ENCODE measurements at regions of chrX and their contacts with region 1.

Region 1: GRCh38 chrX:70289793-70290776 is at the starts of genes KIF4A and PDZD11:
- DNase-seq: peak; percentile 76
- ATAC-seq: peak; percentile 99
- H3K4me3 ChIP-seq: peak within 1 kb of the TSS; percentile 56
- H3K27ac ChIP-seq: peak within 1 kb of the TSS; percentile 58
- H3K4me1 ChIP-seq: peaks cover 2% of the 10 kb centered on the region; the same call in 1 of the 2 replicates
- H3K27me3 ChIP-seq: no peaks in the 10 kb centered on the region; the same call in 1 of the 2 replicates
- CTCF ChIP-seq: no peak
- POLR2A ChIP-seq: peak; percentile 23; the same call in 1 of the 2 replicates
- RAD21 ChIP-seq: no peak
- total RNA-seq, gene KIF4A: 19.0 and 24.4 TPM in 2 replicates
- total RNA-seq, gene PDZD11: 66.4 and 84.1 TPM in 2 replicates

Region 2: GRCh38 chrX:70042399-70043371 is 247.4 kb before region 1 on chrX:
- CTCF ChIA-PET with region 1: no interaction called
- POLR2A ChIA-PET with region 1: no interaction called
- dilution Hi-C with region 1: no loop called
- in situ Hi-C with region 1: no loop called
- intact Hi-C with region 1: no loop called
- DNase-seq: peak; percentile 42
- ATAC-seq: peak; percentile 27; the same call in 1 of the 2 replicates
- H3K4me3 ChIP-seq: no peak overlapping the region
- H3K27ac ChIP-seq: no peak overlapping the region
- H3K4me1 ChIP-seq: peaks cover 2% of the 10 kb centered on the region; the same call in 1 of the 2 replicates
- H3K27me3 ChIP-seq: peaks cover 12% of the 10 kb centered on the region
- CTCF ChIP-seq: no peak
- POLR2A ChIP-seq: no peak
- RAD21 ChIP-seq: no peak

Region 3: DNA sequence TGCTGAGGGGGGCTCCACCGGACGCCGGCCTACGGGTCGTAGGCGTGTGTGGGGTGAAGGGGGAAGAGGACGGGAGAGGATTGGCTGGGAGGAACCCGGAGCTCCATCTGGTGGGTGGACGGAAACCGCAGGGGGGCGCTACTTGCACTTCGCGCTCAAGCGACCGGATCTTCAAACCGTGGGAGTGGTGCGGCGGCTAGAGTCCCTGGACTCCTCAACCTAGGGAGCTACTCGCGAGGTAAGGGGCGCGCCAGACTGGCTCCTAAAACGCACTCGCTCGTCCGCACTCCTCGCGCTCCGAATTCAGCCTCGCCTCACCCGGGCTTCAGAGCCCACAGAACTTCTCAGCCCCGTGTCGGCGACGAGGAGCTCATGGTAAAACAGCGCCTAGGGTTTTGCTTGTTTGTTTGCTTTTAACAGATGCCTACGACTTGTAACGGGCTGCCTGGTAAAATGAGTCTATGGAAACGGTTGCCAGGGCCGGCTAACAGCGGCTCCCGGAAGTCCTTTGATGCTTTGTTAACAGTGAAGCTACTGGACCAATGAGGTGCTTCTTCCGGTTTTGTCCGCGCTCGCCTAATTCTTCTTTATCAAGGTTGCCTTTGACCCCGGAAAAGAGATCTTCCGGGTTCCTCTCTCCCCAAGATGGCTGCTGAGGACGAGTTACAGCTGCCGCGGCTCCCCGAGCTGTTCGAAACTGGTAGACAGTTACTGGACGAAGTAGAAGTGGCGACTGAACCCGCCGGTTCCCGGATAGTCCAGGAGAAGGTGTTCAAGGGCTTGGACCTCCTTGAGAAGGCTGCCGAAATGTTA is 156.6 kb before region 1 on chrX and contains the start of gene IGBP1:
- CTCF ChIA-PET with region 1: interaction called, 3 read pairs
- POLR2A ChIA-PET with region 1: no interaction called
- dilution Hi-C with region 1: no loop called
- in situ Hi-C with region 1: no loop called
- intact Hi-C with region 1: loop called (anchors 5 kb)
- DNase-seq: peak; percentile 83
- ATAC-seq: peak; percentile 88
- H3K4me3 ChIP-seq: peak within 1 kb of the TSS; percentile 83
- H3K27ac ChIP-seq: peak within 1 kb of the TSS; percentile 92
- H3K4me1 ChIP-seq: no peaks in the 10 kb centered on the region
- H3K27me3 ChIP-seq: no peaks in the 10 kb centered on the region
- CTCF ChIP-seq: peak; percentile 65
- POLR2A ChIP-seq: peak; percentile 75
- RAD21 ChIP-seq: peak; percentile 18; the same call in 1 of the 2 replicates
- total RNA-seq, gene IGBP1: 75.3 and 87.1 TPM in 2 replicates

Region 4: DNA sequence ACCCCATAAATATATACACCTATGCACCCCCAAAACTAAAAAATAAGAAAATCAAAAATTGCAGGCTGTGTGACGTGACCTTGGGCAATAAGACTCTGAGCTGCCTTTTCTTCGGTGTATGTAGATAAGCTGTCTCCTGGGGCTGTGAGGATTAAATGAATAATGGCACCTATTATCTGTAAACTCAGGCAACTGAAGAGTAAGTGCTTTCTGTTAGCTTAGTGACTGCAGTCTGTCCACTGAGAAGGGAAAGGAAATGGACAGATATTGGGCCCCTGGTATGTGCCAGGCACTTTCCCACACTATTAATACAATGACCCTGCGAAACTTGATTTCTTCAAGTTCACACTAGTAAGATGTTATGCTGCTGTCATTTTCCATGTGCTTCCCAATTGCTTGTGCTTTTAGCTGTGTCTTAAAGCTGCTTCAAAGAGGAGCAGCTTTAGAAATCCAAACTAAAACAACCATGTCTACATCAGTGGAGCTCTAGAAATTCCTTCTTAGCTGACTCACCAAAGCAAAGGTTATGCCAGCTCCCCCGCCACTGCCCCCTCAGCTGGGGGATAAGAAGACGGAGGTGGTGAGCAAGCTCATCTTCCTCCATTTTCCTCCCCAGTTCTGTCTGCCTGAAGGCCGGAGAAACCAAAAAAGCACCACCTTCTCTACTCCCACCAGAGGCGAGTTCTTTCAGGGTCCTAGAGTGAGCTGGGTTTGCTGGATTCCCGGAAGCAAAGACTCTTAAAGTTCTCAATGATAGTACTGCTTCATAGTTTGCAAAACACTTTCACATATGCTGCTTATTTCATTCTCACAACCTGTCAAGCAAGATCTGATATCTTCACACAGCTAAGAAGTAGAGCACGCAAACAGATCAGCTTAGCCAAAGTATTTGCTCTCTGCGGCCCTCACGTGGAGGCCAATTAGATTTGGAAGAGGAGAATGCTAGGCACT is 121.6 kb before region 1 on chrX:
- CTCF ChIA-PET with region 1: no interaction called
- POLR2A ChIA-PET with region 1: no interaction called
- dilution Hi-C with region 1: no loop called
- in situ Hi-C with region 1: no loop called
- intact Hi-C with region 1: loop called (anchors 1 kb)
- DNase-seq: peak; percentile 77
- ATAC-seq: peak; percentile 70
- H3K4me3 ChIP-seq: no peak overlapping the region
- H3K27ac ChIP-seq: peak overlapping the region; percentile 83
- H3K4me1 ChIP-seq: peaks cover 13% of the 10 kb centered on the region
- H3K27me3 ChIP-seq: no peaks in the 10 kb centered on the region; the same call in 1 of the 2 replicates
- CTCF ChIP-seq: no peak
- POLR2A ChIP-seq: no peak
- RAD21 ChIP-seq: 0 out of 2 replicates have a peak, but pooled peaks have one; percentile 4

Region 5: DNA sequence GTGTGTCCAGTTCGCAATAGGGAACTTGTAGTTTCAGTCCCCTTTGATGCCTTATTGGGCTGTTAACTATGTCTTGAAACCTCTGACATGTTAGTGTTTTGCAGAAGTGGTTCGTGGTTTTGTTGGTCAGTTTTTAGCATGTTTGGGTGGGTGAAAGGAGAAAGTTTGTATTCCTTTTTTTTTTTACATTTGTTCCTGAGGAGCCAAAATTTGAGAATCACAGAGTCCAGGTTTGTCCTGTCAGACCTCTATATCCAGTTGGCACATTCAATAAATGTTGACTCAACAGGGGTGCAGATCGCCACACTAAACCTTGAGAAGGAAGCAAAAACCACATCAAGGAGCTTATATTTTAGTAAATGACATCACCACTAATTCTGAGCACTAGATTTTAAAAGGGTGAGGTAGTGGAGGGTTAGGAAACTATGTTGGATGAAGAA is 180.8 kb after region 1 on chrX:
- CTCF ChIA-PET with region 1: no interaction called
- POLR2A ChIA-PET with region 1: no interaction called
- dilution Hi-C with region 1: no loop called
- in situ Hi-C with region 1: no loop called
- intact Hi-C with region 1: no loop called
- DNase-seq: peak; percentile 18
- ATAC-seq: no peak
- H3K4me3 ChIP-seq: no peak overlapping the region
- H3K27ac ChIP-seq: no peak overlapping the region
- H3K4me1 ChIP-seq: no peaks in the 10 kb centered on the region
- H3K27me3 ChIP-seq: no peaks in the 10 kb centered on the region
- CTCF ChIP-seq: no peak
- POLR2A ChIP-seq: no peak
- RAD21 ChIP-seq: no peak

Measured in IMR-90 (cell line).